IMR-90 (cell line): ENCODE measurements at regions of chr11 and their contacts with region 1.

Region 1: GRCh38 chr11:75721855-75722668 is 4.4 kb downstream of the MOGAT2 start:
- DNase-seq: no peak
- ATAC-seq: no peak
- H3K4me3 ChIP-seq: no peak overlapping the region
- H3K27ac ChIP-seq: no peak overlapping the region
- H3K4me1 ChIP-seq: no peaks in the 10 kb centered on the region
- H3K27me3 ChIP-seq: peaks cover 36% of the 10 kb centered on the region
- CTCF ChIP-seq: no peak
- POLR2A ChIP-seq: no peak
- RAD21 ChIP-seq: no peak

Region 2: GRCh38 chr11:75760710-75761493 is 38.8 kb after region 1 on chr11:
- CTCF ChIA-PET with region 1: no interaction called
- POLR2A ChIA-PET with region 1: no interaction called
- dilution Hi-C with region 1: no loop called
- in situ Hi-C with region 1: no loop called
- intact Hi-C with region 1: no loop called
- DNase-seq: peak; percentile 82
- ATAC-seq: peak; percentile 88
- H3K4me3 ChIP-seq: no peak overlapping the region
- H3K27ac ChIP-seq: no peak overlapping the region
- H3K4me1 ChIP-seq: peaks cover 4% of the 10 kb centered on the region
- H3K27me3 ChIP-seq: peaks cover 8% of the 10 kb centered on the region; the same call in 1 of the 2 replicates
- CTCF ChIP-seq: no peak
- POLR2A ChIP-seq: no peak
- RAD21 ChIP-seq: no peak

Region 3: DNA sequence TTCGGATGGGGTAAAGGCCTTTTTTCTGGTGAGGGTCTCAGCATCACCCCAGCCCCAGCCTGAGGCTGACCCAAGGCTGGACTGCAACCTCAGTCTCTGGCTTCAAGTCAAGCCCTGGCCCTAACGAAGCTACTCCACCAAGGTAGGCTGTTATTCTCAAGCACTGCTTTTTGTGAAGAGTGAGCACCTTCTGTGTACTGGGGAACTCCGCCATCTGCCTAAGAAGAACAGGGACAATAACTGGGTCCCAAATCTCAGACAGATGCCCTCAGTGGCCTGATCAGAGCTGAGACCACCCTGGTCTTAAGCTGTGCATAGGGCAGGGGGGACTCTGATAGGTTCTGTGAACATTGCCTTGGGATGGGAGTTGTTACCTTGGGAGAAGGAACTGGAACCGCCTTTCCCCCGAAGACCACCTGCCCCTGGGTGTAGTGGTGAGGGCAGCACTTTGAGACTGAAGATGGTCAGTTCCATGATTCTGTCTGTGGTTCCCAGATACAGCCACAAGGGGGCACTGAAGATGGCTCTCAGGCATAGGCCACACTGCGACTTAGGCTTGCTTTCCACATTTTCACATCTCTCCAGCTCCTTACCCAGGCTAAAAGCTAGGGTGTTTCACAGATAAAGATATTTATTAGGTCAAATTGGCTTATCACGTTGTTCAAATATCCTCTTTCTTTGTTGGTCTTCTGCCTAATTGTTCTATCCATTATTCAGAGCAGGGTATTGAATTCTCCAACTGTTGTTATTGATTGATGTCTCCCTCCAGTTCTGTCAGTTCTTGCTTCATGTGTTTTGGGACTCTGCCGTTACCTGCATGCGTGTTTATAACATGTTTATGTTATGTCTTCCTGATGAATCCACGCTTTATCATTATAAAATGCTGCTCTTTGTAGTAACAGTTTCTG is 81.1 kb after region 1 on chr11:
- CTCF ChIA-PET with region 1: no interaction called
- POLR2A ChIA-PET with region 1: no interaction called
- dilution Hi-C with region 1: no loop called
- in situ Hi-C with region 1: no loop called
- intact Hi-C with region 1: loop called (anchors 1 kb)
- DNase-seq: peak; percentile 65
- ATAC-seq: peak; percentile 99
- H3K4me3 ChIP-seq: no peak overlapping the region
- H3K27ac ChIP-seq: no peak overlapping the region
- H3K4me1 ChIP-seq: no peaks in the 10 kb centered on the region
- H3K27me3 ChIP-seq: no peaks in the 10 kb centered on the region
- CTCF ChIP-seq: peak; percentile 91
- POLR2A ChIP-seq: no peak
- RAD21 ChIP-seq: peak; percentile 88